Heart right ventricle (tissue), 16 donors: ENCODE measurements at regions of chr4 and their contacts with region 1.

Region 1: GRCh38 chr4:44726262-44726871 is at the start of gene GNPDA2:
- DNase-seq: peak; percentile 91 to 92
- ATAC-seq: peak; percentile 97 to 99 (median 98)
- H3K4me3 ChIP-seq: peak within 1 kb of the TSS; percentile 52 to 91 (median 86)
- H3K27ac ChIP-seq: peak within 1 kb of the TSS; percentile 61 to 92 (median 88)
- H3K4me1 ChIP-seq: peaks cover 0 to 46% (median 30%) of the 10 kb centered on the region in 9 donors
- H3K27me3 ChIP-seq: no peaks in the 10 kb centered on the region
- CTCF ChIP-seq: peak in 7 of 9 donors; percentile 7 to 49 (median 24)
- total RNA-seq, gene GNPDA2: 10.4 to 20.1 (median 12.5) TPM

Region 2: DNA sequence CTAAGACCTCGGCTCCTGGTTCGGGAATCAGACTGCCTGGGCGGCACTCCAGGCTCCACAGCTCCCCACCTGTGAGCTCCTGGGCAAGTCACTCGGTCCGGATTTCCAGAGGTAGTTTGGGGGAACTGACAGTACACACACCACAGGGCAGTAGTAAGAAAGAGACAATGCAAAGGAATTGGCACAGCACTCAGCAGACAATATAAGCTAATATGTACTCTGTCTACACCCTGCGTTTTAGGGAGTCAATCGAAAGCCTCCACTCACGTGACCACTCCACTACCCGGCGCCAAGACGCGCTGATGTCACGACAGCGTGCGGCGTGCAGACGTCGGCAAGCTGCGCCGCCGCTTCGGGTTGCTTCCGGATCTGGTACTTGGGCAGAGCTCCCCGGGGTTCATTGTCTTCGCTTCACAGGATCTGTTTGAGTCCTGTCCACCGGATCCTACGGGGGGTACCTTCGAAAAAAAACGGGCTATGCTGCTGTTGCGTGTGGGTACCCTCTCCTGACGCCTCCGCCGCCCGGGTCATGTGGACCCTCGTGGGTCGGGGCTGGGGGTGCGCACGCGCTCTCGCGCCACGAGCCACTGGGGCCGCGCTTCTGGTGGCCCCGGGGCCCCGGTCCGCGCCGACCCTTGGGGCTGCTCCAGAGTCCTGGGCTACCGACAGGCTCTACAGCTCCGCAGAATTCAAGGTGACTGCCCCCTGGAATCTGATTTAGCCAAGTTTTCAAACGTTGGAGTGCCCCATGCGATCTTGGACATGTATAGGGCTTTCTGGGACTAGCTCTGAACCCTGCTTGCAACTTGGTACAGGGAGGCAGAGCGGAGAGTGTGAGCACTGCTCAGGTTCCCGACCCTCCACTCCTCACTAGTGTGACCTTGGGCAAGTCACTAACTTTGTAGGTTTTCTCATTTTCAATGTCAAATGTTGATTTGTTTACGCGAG is 48.0 kb before region 1 on chr4 and contains the start of gene GUF1:
- intact Hi-C with region 1: loop called in 3 of 10 experiments (anchors 2 to 5 kb)
- DNase-seq: peak; percentile 88 to 89
- ATAC-seq: peak; percentile 98 to 99 (median 99)
- H3K4me3 ChIP-seq: peak within 1 kb of the TSS; percentile 62 to 89 (median 78)
- H3K27ac ChIP-seq: peak within 1 kb of the TSS; percentile 27 to 96 (median 90)
- H3K4me1 ChIP-seq: peaks cover 0 to 35% (median 27%) of the 10 kb centered on the region in 9 donors
- H3K27me3 ChIP-seq: no peaks in the 10 kb centered on the region
- CTCF ChIP-seq: no peak
- total RNA-seq, gene GUF1: 18.5 to 29.6 (median 25.4) TPM

Region 3: DNA sequence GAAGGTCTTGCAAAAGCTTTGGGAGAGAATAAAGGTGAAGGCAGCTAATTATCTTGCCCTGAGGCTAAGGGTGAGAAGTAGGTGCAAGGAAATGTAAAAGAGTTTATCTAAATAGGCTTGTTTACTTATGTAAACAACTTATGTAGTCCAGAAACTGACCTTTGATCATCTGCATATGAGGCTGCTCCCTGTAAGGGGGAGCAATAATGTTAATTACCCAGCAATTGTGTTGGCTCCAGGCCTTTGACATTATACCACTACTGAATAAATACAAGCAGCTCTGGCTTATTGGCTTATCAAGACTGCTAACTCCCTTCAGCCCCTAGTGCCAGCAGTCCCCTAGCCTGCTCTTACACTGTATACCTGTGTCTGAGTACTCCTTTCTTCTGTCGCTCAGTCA is 303.7 kb after region 1 on chr4:
- intact Hi-C with region 1: no loop called
- DNase-seq: no peak
- ATAC-seq: no peak
- H3K4me3 ChIP-seq: no peak overlapping the region
- H3K27ac ChIP-seq: no peak overlapping the region
- H3K4me1 ChIP-seq: peaks cover 0 to 12% (median 0%) of the 10 kb centered on the region in 9 donors
- H3K27me3 ChIP-seq: no peaks in the 10 kb centered on the region
- CTCF ChIP-seq: no peak